Panc1 (cell line): ENCODE measurements at regions of chr6 and their contacts with region 1.

Region 1: DNA sequence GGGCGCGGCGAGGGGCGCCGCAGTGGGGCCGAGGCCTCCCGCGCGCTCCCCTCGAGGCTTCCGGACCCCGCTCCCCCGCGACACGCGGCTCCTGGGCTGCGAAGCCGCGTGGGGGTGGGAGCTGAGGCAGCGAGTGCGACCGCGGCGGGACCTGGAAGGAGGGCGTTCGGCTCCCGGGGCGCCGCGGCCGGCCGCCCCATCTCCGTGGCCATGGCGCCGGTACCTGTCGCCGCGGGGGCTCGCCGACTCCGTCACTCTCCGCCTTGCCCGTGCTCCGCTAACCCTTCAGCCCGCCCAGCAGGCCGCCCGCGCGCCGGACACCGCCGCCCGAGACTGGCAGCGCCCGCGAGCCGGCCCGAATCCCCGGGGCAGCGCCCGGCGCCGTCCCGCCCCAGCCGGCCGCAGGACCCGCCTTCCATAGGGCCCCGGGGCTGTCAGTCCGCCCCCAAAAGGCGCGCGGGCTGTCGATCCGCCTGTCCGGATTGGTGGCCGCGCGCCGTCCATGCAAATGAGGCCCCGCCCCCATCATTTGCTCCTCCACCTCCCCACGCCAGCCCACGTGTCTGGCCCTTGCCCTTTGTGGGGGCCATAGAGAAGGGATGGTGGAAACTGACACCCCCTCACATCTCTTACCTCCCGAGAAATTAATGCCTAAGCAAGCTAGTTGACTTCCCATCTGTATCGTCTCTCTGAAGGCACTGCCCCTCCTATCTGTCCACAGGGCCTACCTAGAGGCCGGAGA is at the start of gene FKBP5:
- DNase-seq: peak; percentile 27
- ATAC-seq: peak; percentile 98
- H3K4me3 ChIP-seq: peak within 1 kb of the TSS; percentile 72 to 86
- H3K27ac ChIP-seq: peak within 1 kb of the TSS; percentile 76
- H3K4me1 ChIP-seq: peaks cover 13% of the 10 kb centered on the region; the same call in 1 of the 2 replicates
- H3K27me3 ChIP-seq: no peaks in the 10 kb centered on the region
- CTCF ChIP-seq: no peak
- total RNA-seq, gene FKBP5: 25.2 TPM

Region 2: DNA sequence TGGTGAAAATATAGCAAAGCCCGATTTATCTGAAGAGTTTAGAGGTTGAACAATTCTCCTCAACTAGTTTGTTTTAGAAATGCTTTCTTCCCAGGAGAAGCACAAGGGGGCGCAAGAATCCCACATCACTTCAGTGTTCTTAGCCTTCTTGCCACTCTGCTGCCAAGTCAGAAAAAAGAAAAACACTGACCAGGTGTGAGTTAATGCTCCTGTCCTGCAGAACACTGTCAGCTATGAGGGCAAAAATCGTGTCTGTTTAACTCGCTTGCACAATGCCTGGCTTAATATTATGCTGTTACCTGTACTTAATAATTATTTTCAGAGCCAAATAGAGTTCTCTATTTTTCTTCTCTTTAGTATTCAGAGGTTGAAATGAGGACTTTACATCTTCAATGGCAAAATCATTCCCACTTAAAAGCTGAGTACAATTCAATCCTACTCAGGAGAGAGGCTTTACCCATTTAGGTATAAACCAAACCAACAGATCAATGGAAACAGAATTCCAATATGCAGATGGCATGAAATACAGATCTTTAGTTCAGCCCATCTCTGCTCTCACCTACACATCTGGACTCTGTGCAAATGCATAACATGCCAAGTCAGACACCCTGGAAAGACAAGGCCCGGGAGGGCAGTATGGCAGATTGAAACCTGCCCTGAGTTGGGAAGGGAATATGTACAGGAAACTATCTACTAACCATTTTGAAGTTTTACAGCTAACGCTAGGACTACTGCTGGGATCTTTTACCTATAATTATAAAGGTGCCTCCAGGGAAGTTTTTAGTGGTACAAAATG is 104.7 kb before region 1 on chr6:
- CTCF ChIA-PET with region 1: no interaction called
- POLR2A ChIA-PET with region 1: no interaction called
- in situ Hi-C with region 1: no loop called
- intact Hi-C with region 1: loop called (anchors 2 kb)
- DNase-seq: peak; percentile 67
- ATAC-seq: peak; percentile 87
- H3K4me3 ChIP-seq: no peak overlapping the region
- H3K27ac ChIP-seq: no peak overlapping the region
- H3K4me1 ChIP-seq: no peaks in the 10 kb centered on the region
- H3K27me3 ChIP-seq: no peaks in the 10 kb centered on the region
- CTCF ChIP-seq: peak; percentile 87